HCT116 (cell line): ENCODE measurements at regions of chr3 and their contacts with region 1.

Region 1: GRCh38 chr3:138329127-138329983 is at the start of gene NME9:
- DNase-seq: peak; percentile 87
- ATAC-seq: peak; percentile 94
- H3K4me3 ChIP-seq: peak within 1 kb of the TSS; percentile 49 to 73
- H3K27ac ChIP-seq: peak within 1 kb of the TSS; percentile 75
- H3K4me1 ChIP-seq: peaks cover 4 to 30% of the 10 kb centered on the region in 2 experiments; a peak in 3 of 4 replicates
- H3K27me3 ChIP-seq: no peaks in the 10 kb centered on the region
- CTCF ChIP-seq: peak; percentile 69 to 83 (median 75)
- POLR2A ChIP-seq: no peak
- RAD21 ChIP-seq: peak; percentile 60; the same call in 1 of the 2 replicates
- total RNA-seq, gene NME9: 0.79 TPM

Region 2: GRCh38 chr3:138068579-138069174 is 260.7 kb before region 1 on chr3:
- CTCF ChIA-PET with region 1: no interaction called
- POLR2A ChIA-PET with region 1: no interaction called
- RAD21 ChIA-PET with region 1: no interaction called
- intact Hi-C with region 1: loop called (anchors 5 kb)
- DNase-seq: peak; percentile 63
- ATAC-seq: peak; percentile 98
- H3K4me3 ChIP-seq: no peak overlapping the region
- H3K27ac ChIP-seq: no peak overlapping the region
- H3K4me1 ChIP-seq: peaks cover 0 to 10% of the 10 kb centered on the region in 2 experiments; a peak in 2 of 4 replicates
- H3K27me3 ChIP-seq: no peaks in the 10 kb centered on the region
- CTCF ChIP-seq: peak; percentile 90 to 99 (median 99)
- POLR2A ChIP-seq: no peak
- RAD21 ChIP-seq: peak; percentile 99

Region 3: DNA sequence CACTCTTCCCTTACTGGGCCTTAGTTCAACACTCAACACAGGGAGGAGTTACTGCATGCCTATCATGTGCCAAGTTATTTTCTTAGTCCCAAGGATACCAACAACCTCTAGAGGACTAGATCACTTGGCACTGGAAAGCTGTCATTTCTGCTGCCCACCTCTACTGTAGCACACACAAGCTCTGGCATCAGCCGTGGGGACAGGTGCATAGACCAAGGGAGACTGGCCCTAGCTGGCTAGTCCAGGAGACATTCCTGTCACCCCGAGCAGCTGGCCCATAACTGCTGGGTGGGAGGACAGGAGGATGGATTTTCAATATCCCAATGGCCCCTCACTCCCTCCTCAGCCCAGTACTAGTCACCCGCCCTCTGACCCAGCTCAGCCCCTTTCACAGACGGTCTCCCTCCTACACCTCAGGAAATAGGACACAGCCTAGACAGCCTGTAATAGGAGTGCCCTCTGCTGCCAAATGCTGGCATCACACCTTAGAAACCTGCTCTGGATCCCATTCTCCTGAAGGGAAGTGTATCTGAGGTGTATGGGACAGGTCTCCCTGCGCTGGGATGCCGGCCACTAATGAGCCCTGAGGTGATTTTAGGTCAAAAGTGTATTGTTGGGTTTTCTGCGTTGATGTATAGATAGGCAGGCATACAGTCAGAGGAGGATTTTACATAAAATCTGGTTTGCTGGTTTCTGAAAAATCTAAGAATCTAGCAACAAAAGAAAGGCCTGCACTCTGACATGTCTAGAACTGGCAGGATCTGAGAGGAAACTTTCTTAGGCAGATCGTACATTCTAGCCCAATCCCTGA is 210.5 kb before region 1 on chr3:
- CTCF ChIA-PET with region 1: no interaction called
- POLR2A ChIA-PET with region 1: no interaction called
- RAD21 ChIA-PET with region 1: no interaction called
- intact Hi-C with region 1: loop called (anchors 5 kb)
- DNase-seq: peak; percentile 69
- ATAC-seq: peak; percentile 71
- H3K4me3 ChIP-seq: no peak overlapping the region
- H3K27ac ChIP-seq: no peak overlapping the region
- H3K4me1 ChIP-seq: peaks cover 13 to 23% of the 10 kb centered on the region in 2 experiments
- H3K27me3 ChIP-seq: no peaks in the 10 kb centered on the region
- CTCF ChIP-seq: peak; percentile 85 to 90 (median 87)
- POLR2A ChIP-seq: no peak
- RAD21 ChIP-seq: peak; percentile 94

Region 4: DNA sequence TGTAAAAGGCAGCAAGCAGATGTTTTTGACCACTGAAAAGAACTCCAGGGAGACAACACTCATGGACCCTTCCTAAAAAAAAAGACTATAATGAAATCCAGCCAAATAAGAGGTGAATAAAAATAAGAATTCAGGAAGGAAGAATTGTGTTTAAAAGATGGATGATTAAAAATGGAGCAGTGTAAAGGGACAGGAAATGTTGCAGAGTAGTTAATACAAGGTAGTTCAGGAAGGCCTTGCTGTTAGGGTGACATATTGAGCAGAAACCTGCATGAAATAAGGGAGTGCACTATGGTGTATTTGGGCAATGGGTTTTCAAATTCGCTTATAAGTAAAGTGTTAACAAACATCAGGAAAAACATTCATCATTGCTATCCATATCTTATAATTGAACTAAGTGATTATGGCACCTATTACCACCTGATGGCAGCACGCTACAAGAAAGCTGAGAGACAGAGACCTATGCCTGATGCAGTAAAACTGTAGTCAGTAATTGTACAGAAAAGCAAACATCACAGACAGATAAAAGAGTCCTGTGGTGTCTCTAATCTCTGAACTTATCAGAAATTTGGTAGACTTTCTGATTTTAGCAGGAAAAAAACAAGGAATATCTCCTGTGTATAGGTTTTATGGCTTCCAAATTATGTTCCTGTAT is 148.9 kb before region 1 on chr3:
- CTCF ChIA-PET with region 1: interaction called, 4 read pairs
- POLR2A ChIA-PET with region 1: no interaction called
- RAD21 ChIA-PET with region 1: no interaction called
- intact Hi-C with region 1: loop called (anchors 2 kb)
- DNase-seq: peak; percentile 41
- ATAC-seq: peak; percentile 90
- H3K4me3 ChIP-seq: no peak overlapping the region
- H3K27ac ChIP-seq: no peak overlapping the region
- H3K4me1 ChIP-seq: peaks cover 4 to 11% of the 10 kb centered on the region in 2 experiments; a peak in 3 of 4 replicates
- H3K27me3 ChIP-seq: no peaks in the 10 kb centered on the region
- CTCF ChIP-seq: peak; percentile 55 to 81 (median 70)
- POLR2A ChIP-seq: no peak
- RAD21 ChIP-seq: peak; percentile 94

Region 5: GRCh38 chr3:138314751-138315150 is 14.6 kb before region 1 on chr3:
- CTCF ChIA-PET with region 1: no interaction called
- POLR2A ChIA-PET with region 1: no interaction called
- RAD21 ChIA-PET with region 1: no interaction called
- intact Hi-C with region 1: no loop called
- DNase-seq: no peak
- ATAC-seq: no peak
- H3K4me3 ChIP-seq: no peak overlapping the region
- H3K27ac ChIP-seq: no peak overlapping the region
- H3K4me1 ChIP-seq: no peaks in the 10 kb centered on the region
- H3K27me3 ChIP-seq: no peaks in the 10 kb centered on the region
- CTCF ChIP-seq: no peak
- POLR2A ChIP-seq: no peak
- RAD21 ChIP-seq: no peak

Region 6: DNA sequence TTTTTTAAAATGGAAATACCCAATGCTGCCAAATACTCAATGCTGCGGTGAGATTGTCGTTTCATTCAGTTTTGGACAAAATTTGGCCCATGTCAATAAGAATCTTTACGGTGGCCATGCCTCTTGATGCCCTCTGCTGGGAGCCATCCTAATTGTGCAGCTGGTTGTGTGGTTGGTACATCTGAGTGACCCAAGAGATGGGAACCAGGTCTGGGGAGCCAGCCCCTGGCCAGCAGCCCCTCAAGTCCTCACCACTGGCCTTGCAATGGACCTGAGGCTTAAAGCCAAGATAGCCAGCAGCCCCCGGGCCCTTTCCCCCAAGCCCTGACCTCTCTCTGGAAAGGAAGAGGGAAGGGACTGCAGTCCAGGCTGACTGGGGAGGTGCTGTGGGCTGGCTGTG is 68.6 kb after region 1 on chr3:
- CTCF ChIA-PET with region 1: no interaction called
- POLR2A ChIA-PET with region 1: no interaction called
- RAD21 ChIA-PET with region 1: no interaction called
- intact Hi-C with region 1: loop called (anchors 1 kb)
- DNase-seq: no peak
- ATAC-seq: peak; percentile 62; the same call in 1 of the 2 replicates
- H3K4me3 ChIP-seq: no peak overlapping the region
- H3K27ac ChIP-seq: no peak overlapping the region
- H3K4me1 ChIP-seq: no peaks in the 10 kb centered on the region
- H3K27me3 ChIP-seq: no peaks in the 10 kb centered on the region
- CTCF ChIP-seq: peak; percentile 21 to 46 (median 34); a peak in 4 of 6 replicates
- POLR2A ChIP-seq: no peak
- RAD21 ChIP-seq: peak; percentile 53

Region 7: GRCh38 chr3:138426226-138426625 is 96.9 kb after region 1 on chr3:
- CTCF ChIA-PET with region 1: interaction called, 3 read pairs
- POLR2A ChIA-PET with region 1: no interaction called
- RAD21 ChIA-PET with region 1: no interaction called
- intact Hi-C with region 1: loop called (anchors 1 kb)
- DNase-seq: peak; percentile 28
- ATAC-seq: peak; percentile 76
- H3K4me3 ChIP-seq: no peak overlapping the region
- H3K27ac ChIP-seq: no peak overlapping the region
- H3K4me1 ChIP-seq: no peaks in the 10 kb centered on the region
- H3K27me3 ChIP-seq: no peaks in the 10 kb centered on the region
- CTCF ChIP-seq: peak; percentile 54 to 68 (median 65); a peak in 5 of 6 replicates
- POLR2A ChIP-seq: no peak
- RAD21 ChIP-seq: peak; percentile 86

Region 8: DNA sequence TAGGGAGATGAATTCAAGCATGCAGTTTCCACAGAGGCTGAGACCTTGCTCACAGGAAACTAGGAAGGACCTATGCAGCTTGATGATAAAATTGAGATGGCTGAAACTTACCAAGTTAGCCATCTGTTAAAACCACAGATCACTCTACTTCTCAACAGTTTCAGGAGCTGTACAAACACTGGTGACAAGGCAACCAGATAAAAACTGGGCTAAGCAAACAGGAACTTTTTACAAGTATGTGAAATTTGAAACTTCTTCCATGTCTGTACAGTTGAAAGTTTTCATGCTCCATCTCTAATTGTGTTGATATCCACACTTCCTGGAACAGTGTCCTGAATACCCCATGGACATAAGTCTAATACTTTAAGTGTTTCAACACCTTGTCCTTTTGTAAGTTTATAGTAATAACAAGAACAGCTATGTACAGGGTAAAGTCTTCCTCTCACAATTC is 357.4 kb after region 1 on chr3:
- CTCF ChIA-PET with region 1: no interaction called
- POLR2A ChIA-PET with region 1: no interaction called
- RAD21 ChIA-PET with region 1: no interaction called
- intact Hi-C with region 1: no loop called
- DNase-seq: no peak
- ATAC-seq: no peak
- H3K4me3 ChIP-seq: no peak overlapping the region
- H3K27ac ChIP-seq: no peak overlapping the region
- H3K4me1 ChIP-seq: no peaks in the 10 kb centered on the region
- H3K27me3 ChIP-seq: no peaks in the 10 kb centered on the region
- CTCF ChIP-seq: no peak
- POLR2A ChIP-seq: no peak
- RAD21 ChIP-seq: no peak

Region 9: DNA sequence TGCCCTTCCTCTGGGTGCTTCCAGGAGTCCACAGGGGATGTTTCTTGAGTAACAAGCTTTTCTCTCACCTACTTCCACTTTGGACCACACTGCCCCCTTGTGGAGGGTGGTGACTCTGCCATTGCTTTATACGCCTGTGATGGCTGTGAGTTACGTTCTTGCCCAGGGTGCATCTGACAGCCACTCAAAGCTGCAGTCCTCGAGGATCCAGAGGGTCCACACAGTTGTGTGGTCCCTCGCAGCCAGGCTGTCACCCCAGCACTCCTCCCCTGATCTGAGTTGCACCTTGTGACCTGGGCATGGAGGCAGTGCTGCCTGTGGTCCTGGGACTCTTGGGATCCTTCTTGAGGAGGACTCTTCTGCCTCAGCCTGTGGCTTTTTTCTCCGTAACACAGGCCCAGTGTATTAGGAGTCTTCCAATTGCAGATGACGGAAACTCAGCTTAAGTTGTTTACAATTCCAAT is 594.2 kb after region 1 on chr3:
- CTCF ChIA-PET with region 1: no interaction called
- POLR2A ChIA-PET with region 1: no interaction called
- RAD21 ChIA-PET with region 1: no interaction called
- intact Hi-C with region 1: loop called (anchors 5 kb)
- DNase-seq: peak; percentile 82
- ATAC-seq: peak; percentile 83
- H3K4me3 ChIP-seq: 0 out of 4 replicates have a peak overlapping the region, but pooled peaks of 1 of the 2 experiments have one; percentile 25
- H3K27ac ChIP-seq: no peak overlapping the region
- H3K4me1 ChIP-seq: peaks cover 16 to 20% of the 10 kb centered on the region in 2 experiments
- H3K27me3 ChIP-seq: no peaks in the 10 kb centered on the region
- CTCF ChIP-seq: peak in 2 of 3 experiments; percentile 93 to 94; a peak in 4 of 6 replicates
- POLR2A ChIP-seq: no peak
- RAD21 ChIP-seq: no peak